Left ventricle myocardium superior (tissue), 1 donor: ENCODE measurements at regions of chr9 and their contacts with region 1.

Region 1: GRCh38 chr9:2241836-2242741 is 226.9 kb downstream of the SMARCA2 start:
- DNase-seq: peak; percentile 85
- ATAC-seq: peak; percentile 98

Region 2: DNA sequence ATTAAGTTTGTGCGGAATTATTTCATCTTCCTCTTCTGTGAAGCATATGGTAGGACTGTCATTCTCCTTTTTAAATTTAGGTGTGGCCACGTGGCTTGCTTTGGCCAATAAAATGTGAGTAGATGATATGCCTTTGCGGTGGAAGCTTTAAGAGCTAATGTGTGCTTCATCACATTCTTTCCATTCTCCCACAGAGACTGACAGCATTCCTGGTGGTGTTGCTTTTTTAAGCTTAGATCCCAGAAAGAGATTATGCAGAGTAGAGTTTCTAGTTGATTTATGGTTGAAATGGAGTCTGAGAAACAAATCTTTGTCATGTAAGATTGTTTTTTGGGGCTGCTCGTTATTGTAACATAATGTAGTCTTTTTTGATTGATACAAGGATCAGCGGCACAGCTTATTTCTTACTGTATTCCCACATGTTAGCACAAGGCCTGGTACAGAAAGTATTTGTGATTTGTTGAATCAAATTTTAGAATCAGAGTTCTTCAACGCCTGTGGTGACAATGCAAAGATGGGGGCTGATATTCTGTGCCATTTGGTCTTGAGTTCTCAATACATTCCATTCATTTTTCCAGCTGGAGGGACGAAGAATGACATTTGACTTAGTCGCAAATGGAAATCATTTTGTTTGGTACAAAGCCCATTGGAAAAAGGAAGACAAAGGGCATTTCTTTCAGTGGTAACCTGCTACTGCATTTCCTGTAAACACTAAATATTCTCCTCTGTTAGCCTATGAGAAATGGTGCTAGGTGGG is 169.5 kb after region 1 on chr9:
- intact Hi-C with region 1: no loop called
- DNase-seq: no peak
- ATAC-seq: no peak

Region 3: DNA sequence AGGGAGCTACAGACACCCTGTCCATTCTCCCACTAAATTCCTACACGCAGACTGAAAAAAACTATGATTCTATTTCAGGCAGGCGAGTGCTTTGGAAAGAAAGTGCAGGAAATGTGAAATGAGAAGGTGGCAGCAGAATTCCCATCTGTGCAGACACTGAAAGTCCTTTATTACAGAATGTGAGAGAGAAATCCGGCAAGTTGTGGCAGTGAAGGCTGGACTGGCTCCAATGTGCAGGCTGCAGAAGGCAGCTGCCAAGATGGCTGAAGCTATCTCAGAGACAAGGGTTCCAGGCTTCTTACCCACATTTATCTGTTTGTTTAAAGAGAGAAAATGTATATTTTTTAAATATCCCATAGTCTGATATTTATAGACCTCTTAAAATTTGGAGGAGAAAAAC is 217.7 kb after region 1 on chr9:
- intact Hi-C with region 1: loop called (anchors 10 kb)
- DNase-seq: no peak
- ATAC-seq: peak; percentile 18